CD8-positive, alpha-beta T cell (primary cell): ENCODE measurements at regions of chr17 and their contacts with region 1.

Region 1: DNA sequence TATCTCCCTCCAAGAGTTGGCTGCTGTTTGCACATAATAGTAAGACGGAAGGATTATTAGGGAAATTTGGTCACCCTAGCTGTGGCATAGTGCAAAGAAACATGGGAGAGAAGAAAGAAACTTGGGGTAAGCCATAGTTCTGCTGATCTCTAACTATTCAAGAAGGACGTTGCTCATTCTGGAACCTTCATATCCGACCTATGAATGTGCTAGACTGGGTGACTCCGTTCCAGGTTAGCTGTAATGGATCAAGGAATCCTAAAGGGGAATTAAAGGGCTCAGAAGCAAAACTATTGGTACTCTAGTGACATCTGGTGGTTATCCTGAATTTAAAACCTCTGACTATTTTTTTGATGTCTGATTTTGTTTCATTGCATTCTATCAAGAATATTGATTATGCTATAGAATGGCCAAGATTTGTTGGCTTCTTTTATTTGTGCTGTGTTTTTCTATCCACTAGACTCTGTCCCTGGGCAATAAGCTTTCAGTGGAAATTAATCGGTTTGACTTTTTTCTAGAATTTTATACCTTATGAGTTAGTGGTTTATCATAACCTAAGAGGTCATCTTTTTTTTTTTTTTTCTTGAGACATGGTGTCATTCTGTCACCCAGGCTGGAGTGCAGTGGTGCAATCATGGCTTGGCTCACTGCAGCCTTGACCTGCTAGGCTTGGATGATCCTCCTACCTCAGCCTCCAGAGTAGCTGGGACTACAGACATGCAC is 19.5 kb downstream of the PCTP start:
- DNase-seq: peak in 2 of 9 experiments; percentile 10 to 20
- ATAC-seq: no peak
- H3K4me3 ChIP-seq: no peak overlapping the region
- H3K4me3 Mint-ChIP-seq: no peak overlapping the region
- H3K27ac ChIP-seq: no peak overlapping the region
- H3K27ac Mint-ChIP-seq: no peak overlapping the region
- H3K4me1 ChIP-seq: no peaks in the 10 kb centered on the region
- H3K4me1 Mint-ChIP-seq: no peaks in the 10 kb centered on the region
- H3K27me3 ChIP-seq: no peaks in the 10 kb centered on the region
- H3K27me3 Mint-ChIP-seq: no peaks in the 10 kb centered on the region
- CTCF ChIP-seq: no peak

Region 2: GRCh38 chr17:55750750-55751657 is 19.3 kb before region 1 on chr17 and contains the start of gene PCTP:
- CTCF ChIA-PET with region 1: no interaction called
- POLR2A ChIA-PET with region 1: no interaction called
- intact Hi-C with region 1: no loop called
- DNase-seq: peak; percentile 51 to 83 (median 74)
- ATAC-seq: peak; percentile 97
- H3K4me3 ChIP-seq: peak within 1 kb of the TSS; percentile 58 to 90
- H3K4me3 Mint-ChIP-seq: peak within 1 kb of the TSS; percentile 79
- H3K27ac ChIP-seq: peak within 1 kb of the TSS in 1 of 2 experiments; percentile 54
- H3K27ac Mint-ChIP-seq: peak within 1 kb of the TSS; percentile 33
- H3K4me1 ChIP-seq: peaks cover 10% of the 10 kb centered on the region
- H3K4me1 Mint-ChIP-seq: peaks cover 19% of the 10 kb centered on the region
- H3K27me3 ChIP-seq: no peaks in the 10 kb centered on the region
- H3K27me3 Mint-ChIP-seq: peaks cover 17% of the 10 kb centered on the region
- CTCF ChIP-seq: no peak
- total RNA-seq, gene PCTP: 0.56 to 1.2 TPM

Region 3: GRCh38 chr17:55783684-55784245 is 13.5 kb after region 1 on chr17:
- CTCF ChIA-PET with region 1: interaction called, 11 read pairs
- POLR2A ChIA-PET with region 1: no interaction called
- intact Hi-C with region 1: no loop called
- DNase-seq: no peak
- ATAC-seq: no peak
- H3K4me3 ChIP-seq: no peak overlapping the region
- H3K4me3 Mint-ChIP-seq: no peak overlapping the region
- H3K27ac ChIP-seq: no peak overlapping the region
- H3K27ac Mint-ChIP-seq: no peak overlapping the region
- H3K4me1 ChIP-seq: no peaks in the 10 kb centered on the region
- H3K4me1 Mint-ChIP-seq: no peaks in the 10 kb centered on the region
- H3K27me3 ChIP-seq: no peaks in the 10 kb centered on the region
- H3K27me3 Mint-ChIP-seq: peaks cover 3% of the 10 kb centered on the region
- CTCF ChIP-seq: no peak